CD4-positive, alpha-beta memory T cell (primary cell): ENCODE measurements at regions of chr9 and their contacts with region 1.

Region 1: DNA sequence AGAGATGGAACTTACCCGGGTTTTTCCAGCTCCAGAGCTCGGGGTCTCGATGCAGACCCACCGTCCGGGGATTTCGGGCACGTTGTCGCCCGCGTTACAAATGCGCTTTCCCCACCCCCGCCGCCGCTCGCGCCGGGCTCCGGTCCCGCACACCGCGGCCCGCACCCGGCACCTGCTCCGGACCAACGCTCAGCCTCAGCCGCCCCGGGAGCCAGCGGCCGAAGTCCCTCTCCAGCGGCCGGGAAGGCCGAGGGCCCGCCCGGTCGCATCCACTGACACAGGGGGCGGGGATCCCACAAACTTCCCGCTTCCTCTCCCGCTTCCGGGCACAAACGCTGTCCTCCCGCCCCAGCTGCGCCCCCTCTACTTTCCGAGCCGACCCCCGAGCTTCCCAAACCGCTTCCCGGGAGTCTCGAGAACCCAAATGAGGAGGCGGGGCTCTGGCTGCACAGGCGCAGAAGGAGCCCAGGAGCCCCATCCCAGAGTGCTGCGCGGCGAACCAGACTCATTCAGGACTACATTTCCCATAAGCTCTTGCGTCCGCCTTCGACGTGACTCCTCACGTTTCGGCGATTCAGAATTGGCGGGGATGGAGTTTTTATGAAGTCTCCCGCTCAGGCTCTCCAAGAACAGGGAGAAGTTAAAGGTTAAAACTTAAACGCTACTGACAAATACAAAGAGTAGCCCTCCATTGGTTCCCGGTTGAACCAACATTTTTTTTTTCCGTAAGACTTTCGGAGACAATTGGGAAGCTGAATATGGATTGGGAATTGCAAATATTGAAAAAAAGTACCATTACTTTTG is at the start of gene ZNF782:
- DNase-seq: peak; percentile 80 to 84 (median 81)
- H3K4me3 ChIP-seq: peak within 1 kb of the TSS; percentile 4 to 84
- H3K4me3 Mint-ChIP-seq: peak within 1 kb of the TSS; percentile 100
- H3K27ac ChIP-seq: peak within 1 kb of the TSS; percentile 73
- H3K27ac Mint-ChIP-seq: peak within 1 kb of the TSS; percentile 86 to 100 (median 99)
- H3K4me1 ChIP-seq: peaks cover 32% of the 10 kb centered on the region
- H3K4me1 Mint-ChIP-seq: peaks cover 26 to 53% (median 34%) of the 10 kb centered on the region in 4 donors
- H3K27me3 ChIP-seq: no peaks in the 10 kb centered on the region
- H3K27me3 Mint-ChIP-seq: peaks cover 3% of the 10 kb centered on the region in 2 donors
- total RNA-seq, gene ZNF782: 14.2 to 14.7 TPM

Region 2: DNA sequence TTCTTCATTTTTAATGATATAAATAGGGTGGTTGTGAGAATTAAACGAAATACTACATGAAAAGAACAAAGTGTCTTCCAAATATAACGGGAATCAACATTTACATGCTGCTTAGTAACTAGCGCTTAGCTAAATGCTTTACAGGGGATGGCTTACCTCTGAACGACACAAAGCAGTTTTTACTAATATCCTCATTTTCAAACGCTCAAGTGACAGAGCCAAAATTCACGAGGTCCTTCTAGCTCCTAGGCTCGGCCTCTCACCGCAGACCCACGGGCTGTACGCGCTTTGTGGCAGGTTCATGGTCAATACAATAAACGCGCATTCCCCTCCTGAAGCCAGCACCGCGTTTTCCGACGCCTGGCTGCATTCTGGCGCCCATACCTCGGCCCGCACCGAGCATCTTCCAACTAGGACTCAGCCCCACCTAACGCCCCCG is 76.8 kb before region 1 on chr9:
- CTCF ChIA-PET with region 1: interaction called, 7 read pairs
- POLR2A ChIA-PET with region 1: interaction called, 7 read pairs
- intact Hi-C with region 1: loop called (anchors 1 kb)
- DNase-seq: peak in 2 of 5 donors; percentile 25 to 31
- H3K4me3 ChIP-seq: peak overlapping the region; percentile 82 to 89
- H3K4me3 Mint-ChIP-seq: peak overlapping the region; percentile 90 to 100 (median 98)
- H3K27ac ChIP-seq: peak overlapping the region; percentile 62
- H3K27ac Mint-ChIP-seq: peak overlapping the region; percentile 86 to 99 (median 98)
- H3K4me1 ChIP-seq: peaks cover 19% of the 10 kb centered on the region
- H3K4me1 Mint-ChIP-seq: peaks cover 27 to 51% (median 40%) of the 10 kb centered on the region in 4 donors
- H3K27me3 ChIP-seq: no peaks in the 10 kb centered on the region
- H3K27me3 Mint-ChIP-seq: no peaks in the 10 kb centered on the region

Region 3: DNA sequence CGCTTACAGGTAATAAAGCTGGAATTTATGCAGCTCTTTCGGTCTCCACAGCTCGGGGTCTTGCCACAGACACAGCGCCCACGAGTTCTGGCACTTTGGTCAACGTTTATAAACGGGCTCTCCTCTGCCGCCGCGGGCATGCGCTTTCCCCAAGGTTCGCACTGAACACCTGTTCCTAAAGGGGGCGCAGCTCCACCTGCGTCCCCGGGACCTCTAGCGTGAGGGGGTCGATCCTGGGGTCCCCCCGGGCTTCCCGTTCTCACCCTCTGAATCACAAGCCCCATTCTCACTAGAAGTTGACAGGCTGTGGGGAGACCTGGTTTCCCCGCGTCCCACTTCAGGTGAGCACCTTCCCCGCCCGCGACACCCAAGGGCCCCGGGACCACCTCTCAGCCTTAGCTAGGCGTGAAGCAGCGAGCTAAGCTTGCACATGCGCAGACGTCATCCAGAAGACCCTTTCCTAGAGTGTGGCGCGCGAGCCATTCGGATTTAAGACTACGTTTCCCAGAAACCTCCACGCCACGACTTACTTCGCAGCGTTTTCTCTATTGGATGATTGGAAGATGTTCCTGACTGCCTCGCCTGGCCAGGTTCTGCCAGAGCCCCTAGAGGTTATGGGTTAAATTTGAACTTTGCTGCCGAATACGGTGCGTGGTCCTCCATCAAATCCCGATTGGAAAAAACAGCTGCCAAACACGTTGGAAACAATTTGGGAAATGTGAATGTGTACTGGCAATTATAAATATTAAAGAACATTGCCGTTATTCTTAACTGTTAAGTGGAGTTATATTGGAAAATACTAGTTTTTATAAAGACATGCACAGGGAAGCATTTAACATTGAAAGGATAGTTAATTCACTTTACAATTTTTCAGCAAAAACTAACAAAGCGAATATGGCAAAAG is 21.4 kb after region 1 on chr9:
- CTCF ChIA-PET with region 1: interaction called, 16 read pairs
- POLR2A ChIA-PET with region 1: interaction called, 5 read pairs
- intact Hi-C with region 1: loop called (anchors 2 kb)
- DNase-seq: peak in 4 of 5 donors; percentile 11 to 15 (median 12)
- H3K4me3 ChIP-seq: peak overlapping the region in 1 of 2 donors; percentile 46
- H3K4me3 Mint-ChIP-seq: peak overlapping the region; percentile 82 to 92 (median 86)
- H3K27ac ChIP-seq: no peak overlapping the region
- H3K27ac Mint-ChIP-seq: peak overlapping the region; percentile 60 to 92 (median 85)
- H3K4me1 ChIP-seq: peaks cover 19% of the 10 kb centered on the region
- H3K4me1 Mint-ChIP-seq: peaks cover 15 to 21% (median 17%) of the 10 kb centered on the region in 4 donors
- H3K27me3 ChIP-seq: peaks cover 10% of the 10 kb centered on the region
- H3K27me3 Mint-ChIP-seq: peaks cover 31 to 34% of the 10 kb centered on the region in 2 donors

Region 4: DNA sequence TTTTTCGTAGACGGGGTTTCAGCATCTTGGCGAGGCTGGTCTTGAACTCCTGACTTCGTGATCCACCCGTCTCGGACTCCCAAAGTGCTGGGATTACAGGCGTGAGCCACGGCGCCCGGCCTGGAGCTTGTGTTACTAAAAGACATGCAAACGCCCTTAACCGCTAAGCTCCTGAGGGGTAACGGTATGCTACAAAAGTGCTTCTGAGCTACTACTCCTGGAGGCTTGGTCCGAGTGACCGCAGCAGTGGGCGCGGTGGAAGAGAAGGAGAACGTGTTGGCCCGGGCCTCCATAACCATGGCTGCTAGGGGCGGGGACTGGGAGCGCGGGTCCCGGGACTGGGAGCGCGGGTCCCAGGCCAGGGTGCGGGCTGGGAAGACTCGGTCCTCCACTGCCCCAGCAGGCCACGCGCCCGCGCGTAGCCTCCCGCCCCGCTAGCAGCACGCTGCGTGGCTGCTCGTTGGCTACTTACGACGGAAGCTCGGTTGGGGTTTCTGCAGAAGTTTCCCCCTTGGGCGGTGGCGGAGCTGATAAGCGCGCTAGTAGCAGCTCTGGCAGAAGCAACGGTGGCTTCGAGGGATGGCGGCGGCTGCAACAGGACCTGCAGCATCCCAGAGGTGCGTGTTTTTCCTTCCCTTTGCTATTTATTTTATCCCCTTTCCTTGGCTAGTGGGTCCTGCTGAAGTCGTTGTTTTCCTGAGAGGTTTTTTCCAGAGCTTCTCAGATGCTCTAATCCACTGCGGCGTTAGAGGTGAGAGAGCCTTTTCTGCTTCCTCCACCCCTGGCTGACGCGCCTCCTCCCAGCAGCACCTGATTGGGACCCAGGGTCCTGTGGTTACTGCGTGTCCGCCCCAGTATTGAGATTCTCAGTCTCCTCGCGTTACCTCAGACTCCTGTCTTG is 383.9 kb after region 1 on chr9:
- CTCF ChIA-PET with region 1: interaction called, 13 read pairs
- POLR2A ChIA-PET with region 1: interaction called, 13 read pairs
- intact Hi-C with region 1: loop called (anchors 5 kb)
- DNase-seq: peak; percentile 69 to 81 (median 77)
- H3K4me3 ChIP-seq: peak overlapping the region; percentile 14 to 85
- H3K4me3 Mint-ChIP-seq: peak overlapping the region; percentile 92 to 98 (median 97)
- H3K27ac ChIP-seq: peak overlapping the region; percentile 57
- H3K27ac Mint-ChIP-seq: peak overlapping the region; percentile 86 to 96 (median 95)
- H3K4me1 ChIP-seq: peaks cover 11% of the 10 kb centered on the region
- H3K4me1 Mint-ChIP-seq: peaks cover 17 to 40% (median 23%) of the 10 kb centered on the region in 4 donors
- H3K27me3 ChIP-seq: no peaks in the 10 kb centered on the region
- H3K27me3 Mint-ChIP-seq: no peaks in the 10 kb centered on the region

Region 5: DNA sequence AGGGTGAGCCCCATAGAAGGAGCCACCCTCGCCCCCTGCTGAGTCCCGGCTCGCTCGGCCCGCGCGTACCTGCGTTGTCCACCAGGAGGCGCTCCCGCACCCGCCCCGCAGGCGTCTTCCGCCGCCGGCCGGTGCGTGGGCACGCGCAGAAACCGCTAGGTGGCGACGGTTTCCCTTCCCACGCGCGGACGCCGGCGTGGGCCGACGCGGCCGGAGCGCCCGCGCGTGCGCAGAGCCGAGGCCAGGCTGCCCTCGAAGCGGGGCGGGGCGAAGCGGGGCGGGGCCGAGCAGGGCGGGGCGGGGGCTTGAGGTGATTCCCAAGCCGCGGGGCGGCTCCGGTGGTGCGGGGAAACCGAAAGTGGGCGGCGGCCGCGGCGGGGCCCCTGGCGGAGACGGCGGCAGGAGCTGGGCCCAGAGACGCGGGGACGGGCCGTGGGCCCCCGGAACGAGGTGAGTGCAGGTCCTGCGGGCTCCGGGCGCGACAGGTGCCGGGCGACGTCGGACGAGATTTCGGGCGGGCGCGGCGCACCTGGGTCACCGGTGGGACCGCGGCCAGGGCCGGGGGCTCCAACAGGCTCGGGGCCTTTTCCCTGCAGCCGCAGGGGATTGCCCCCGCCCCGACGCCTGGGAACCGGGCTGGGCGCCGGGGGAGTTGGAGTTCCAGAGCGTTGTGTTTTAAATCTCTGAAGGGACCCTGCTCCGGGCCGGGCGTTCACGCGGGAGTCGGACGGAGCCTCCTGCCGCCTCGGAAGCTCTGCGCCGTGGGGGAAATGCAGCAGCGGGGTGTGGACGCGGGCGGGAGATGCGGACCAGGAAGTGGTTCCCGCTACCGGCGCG is 557.7 kb after region 1 on chr9 and contains the start of gene TDRD7:
- CTCF ChIA-PET with region 1: interaction called, 5 read pairs
- POLR2A ChIA-PET with region 1: interaction called, 6 read pairs
- intact Hi-C with region 1: loop called (anchors 1 kb)
- DNase-seq: peak; percentile 86 to 94 (median 90)
- H3K4me3 ChIP-seq: peak within 1 kb of the TSS; percentile 38 to 61
- H3K4me3 Mint-ChIP-seq: peak within 1 kb of the TSS; percentile 82 to 93 (median 90)
- H3K27ac ChIP-seq: peak within 1 kb of the TSS; percentile 84
- H3K27ac Mint-ChIP-seq: peak within 1 kb of the TSS; percentile 82 to 96 (median 93)
- H3K4me1 ChIP-seq: peaks cover 21% of the 10 kb centered on the region
- H3K4me1 Mint-ChIP-seq: peaks cover 23 to 37% (median 32%) of the 10 kb centered on the region in 4 donors
- H3K27me3 ChIP-seq: no peaks in the 10 kb centered on the region
- H3K27me3 Mint-ChIP-seq: peaks cover 5 to 16% of the 10 kb centered on the region in 2 donors
- total RNA-seq, gene TDRD7: 12.7 to 13.6 TPM

Region 6: DNA sequence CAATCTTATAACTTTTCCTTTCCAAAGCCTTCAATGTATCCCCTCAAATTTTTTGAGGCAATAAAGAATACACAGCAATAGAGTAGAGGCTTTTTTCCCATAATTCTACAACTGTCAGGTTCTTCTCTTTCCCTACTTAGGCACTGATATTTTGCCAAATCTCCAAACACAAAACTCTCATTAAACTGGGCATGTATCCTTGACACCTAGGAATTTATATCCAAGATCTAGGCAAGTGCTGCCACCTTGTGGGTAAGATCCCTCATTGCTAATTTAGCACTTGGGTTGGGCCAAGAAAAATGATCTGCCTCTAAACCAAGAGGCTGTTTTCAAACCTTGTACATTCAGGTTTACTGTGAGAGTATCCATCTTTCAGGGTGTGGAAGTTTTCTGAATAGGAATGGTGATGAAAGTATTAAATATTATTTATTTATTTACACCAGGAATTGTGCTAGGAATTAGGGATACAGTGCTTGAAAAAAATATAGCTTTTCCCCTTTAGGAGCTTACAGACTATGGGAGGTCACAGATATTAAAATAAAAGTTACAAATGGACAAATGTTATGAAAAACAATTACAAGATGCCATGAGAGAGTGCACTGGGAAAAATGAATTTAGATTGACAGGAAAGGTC is 761.3 kb after region 1 on chr9:
- CTCF ChIA-PET with region 1: interaction called, 38 read pairs
- POLR2A ChIA-PET with region 1: no interaction called
- intact Hi-C with region 1: loop called (anchors 1 kb)
- DNase-seq: peak; percentile 49 to 63 (median 57)
- H3K4me3 ChIP-seq: no peak overlapping the region
- H3K4me3 Mint-ChIP-seq: no peak overlapping the region
- H3K27ac ChIP-seq: no peak overlapping the region
- H3K27ac Mint-ChIP-seq: peak overlapping the region in 2 of 7 donors; percentile 1 to 10
- H3K4me1 ChIP-seq: no peaks in the 10 kb centered on the region
- H3K4me1 Mint-ChIP-seq: peaks cover 0 to 1% (median 0%) of the 10 kb centered on the region in 4 donors
- H3K27me3 ChIP-seq: no peaks in the 10 kb centered on the region
- H3K27me3 Mint-ChIP-seq: no peaks in the 10 kb centered on the region